Heart right ventricle (tissue), 16 donors: ENCODE measurements at regions of chr15 and their contacts with region 1.

Region 1: GRCh38 chr15:62549345-62549970 is 384.4 kb upstream of the C2CD4B start:
- DNase-seq: no peak
- ATAC-seq: no peak
- H3K4me3 ChIP-seq: no peak overlapping the region
- H3K27ac ChIP-seq: no peak overlapping the region
- H3K4me1 ChIP-seq: peaks cover 19 to 54% (median 45%) of the 10 kb centered on the region in 9 donors
- H3K27me3 ChIP-seq: no peaks in the 10 kb centered on the region
- CTCF ChIP-seq: peak; percentile 7 to 55 (median 41)

Region 2: GRCh38 chr15:62426387-62426956 is 123.0 kb before region 1 on chr15:
- intact Hi-C with region 1: no loop called
- DNase-seq: no peak
- ATAC-seq: no peak
- H3K4me3 ChIP-seq: no peak overlapping the region
- H3K27ac ChIP-seq: no peak overlapping the region
- H3K4me1 ChIP-seq: peaks cover 3 to 40% (median 21%) of the 10 kb centered on the region in 9 donors
- H3K27me3 ChIP-seq: no peaks in the 10 kb centered on the region
- CTCF ChIP-seq: no peak

Region 3: GRCh38 chr15:62495670-62496614 is 53.5 kb before region 1 on chr15:
- intact Hi-C with region 1: loop called in 1 of 10 experiments (anchors 5 kb)
- DNase-seq: peak in 1 of 2 donors; percentile 60
- ATAC-seq: peak; percentile 49 to 91 (median 82)
- H3K4me3 ChIP-seq: no peak overlapping the region
- H3K27ac ChIP-seq: peak overlapping the region in 9 of 10 donors; percentile 34 to 76 (median 58)
- H3K4me1 ChIP-seq: peaks cover 8 to 65% (median 45%) of the 10 kb centered on the region in 9 donors
- H3K27me3 ChIP-seq: no peaks in the 10 kb centered on the region
- CTCF ChIP-seq: no peak

Region 4: DNA sequence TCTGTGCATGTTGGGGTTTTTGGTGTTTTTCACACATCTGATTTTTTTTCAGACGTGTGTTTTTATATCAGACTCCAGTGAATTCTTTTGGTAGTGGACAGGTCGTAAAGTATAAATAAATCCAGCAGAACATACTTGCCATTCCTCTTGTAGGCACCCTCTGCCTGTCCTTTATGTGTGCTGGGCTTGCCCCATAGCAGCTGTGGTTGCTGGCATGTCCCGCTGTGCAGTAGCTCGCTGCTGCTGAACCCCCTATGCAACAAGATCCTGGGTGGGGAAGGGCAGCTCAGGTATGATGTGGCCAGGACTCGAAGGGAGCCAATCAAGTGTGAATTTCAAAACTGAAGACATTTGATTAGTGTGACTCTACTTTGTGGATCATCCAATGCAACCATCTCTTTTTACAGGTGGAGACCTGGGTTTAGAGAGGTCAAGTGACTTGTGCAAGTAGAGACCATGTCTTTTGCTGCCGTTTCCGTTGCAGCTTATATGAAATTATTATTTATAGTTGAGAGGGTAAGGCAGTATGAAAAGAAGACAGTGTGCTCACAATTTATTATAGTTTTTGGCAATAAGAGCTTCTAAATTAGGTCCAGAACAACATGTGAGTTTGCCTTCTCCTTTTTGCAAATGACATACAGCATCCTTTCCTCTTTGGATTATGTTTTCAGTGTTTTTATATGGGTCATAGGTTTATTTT is 33.6 kb before region 1 on chr15:
- intact Hi-C with region 1: loop called in 1 of 10 experiments (anchors 5 kb)
- DNase-seq: no peak
- ATAC-seq: peak in 5 of 8 donors; percentile 46 to 64 (median 50)
- H3K4me3 ChIP-seq: no peak overlapping the region
- H3K27ac ChIP-seq: peak overlapping the region in 3 of 10 donors; percentile 17 to 38 (median 20)
- H3K4me1 ChIP-seq: peaks cover 0 to 44% (median 7%) of the 10 kb centered on the region in 9 donors
- H3K27me3 ChIP-seq: no peaks in the 10 kb centered on the region
- CTCF ChIP-seq: no peak

Region 5: DNA sequence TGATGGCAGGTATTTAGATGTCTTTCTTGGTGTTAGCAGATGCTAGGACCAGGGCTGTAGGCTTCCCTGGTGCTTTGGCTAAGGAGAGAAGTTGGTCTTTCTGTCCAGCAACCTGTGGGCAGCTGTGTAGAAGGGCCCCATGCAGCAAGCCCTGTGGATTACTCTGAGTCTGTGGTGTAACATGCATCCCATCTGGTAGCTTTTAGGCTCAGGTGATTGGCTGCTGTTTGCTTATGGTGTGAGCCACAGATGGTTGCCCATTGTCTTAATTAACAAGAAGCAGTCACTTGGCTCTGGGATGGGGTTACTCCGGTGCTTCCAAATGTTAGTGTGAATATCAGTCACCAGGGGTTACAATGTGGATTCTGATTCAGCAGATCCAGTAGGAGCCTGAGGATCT is 15.8 kb before region 1 on chr15:
- intact Hi-C with region 1: no loop called
- DNase-seq: no peak
- ATAC-seq: peak in 3 of 8 donors; percentile 14 to 29 (median 18)
- H3K4me3 ChIP-seq: no peak overlapping the region
- H3K27ac ChIP-seq: no peak overlapping the region
- H3K4me1 ChIP-seq: peaks cover 0 to 21% (median 14%) of the 10 kb centered on the region in 9 donors
- H3K27me3 ChIP-seq: no peaks in the 10 kb centered on the region
- CTCF ChIP-seq: no peak

Region 6: DNA sequence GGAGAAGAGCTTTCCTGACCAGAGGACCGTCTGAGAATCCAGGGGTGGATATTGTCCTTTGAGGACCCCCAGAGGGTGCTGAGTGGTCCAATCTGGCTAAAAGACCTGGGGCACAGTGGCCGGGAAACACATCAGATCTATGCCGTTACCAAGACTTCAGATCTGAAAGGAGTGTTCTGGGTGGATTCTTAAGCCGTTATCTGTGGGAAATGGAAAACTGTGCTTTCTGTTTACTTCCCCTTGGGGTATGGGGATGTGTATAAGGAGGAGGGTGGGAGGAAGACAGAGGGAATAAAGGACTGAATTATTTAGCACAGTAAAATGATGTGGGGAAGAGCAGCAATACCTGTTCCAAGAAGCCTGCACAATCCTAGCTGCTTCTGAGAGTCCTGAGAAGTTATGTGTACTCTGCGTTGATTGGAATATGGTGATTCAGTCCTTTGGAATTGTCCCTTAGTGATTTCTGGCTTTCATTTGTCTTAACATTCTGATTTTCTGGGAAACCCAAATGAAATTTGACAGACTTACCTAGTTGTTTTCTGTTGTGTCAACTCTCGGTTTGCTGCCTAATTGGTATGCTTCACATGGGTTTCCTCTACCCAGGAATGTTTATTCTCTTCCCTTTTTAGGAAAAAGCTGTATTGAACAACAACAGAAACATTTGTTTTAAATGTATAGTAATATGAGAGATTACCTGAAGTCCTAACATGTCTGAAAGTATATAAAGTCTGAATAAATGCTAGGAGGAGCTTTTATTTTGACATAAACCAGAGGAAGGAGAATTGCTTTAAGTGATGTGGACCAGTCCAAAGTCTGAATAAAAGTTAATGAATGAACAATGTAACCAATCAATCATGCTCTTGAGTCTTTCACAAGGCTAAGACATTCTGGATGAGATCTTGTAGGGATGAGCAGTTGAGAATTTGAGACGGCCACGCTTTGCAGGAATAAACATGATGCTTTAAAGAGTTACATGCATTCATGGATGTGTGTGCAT is 42.7 kb after region 1 on chr15:
- intact Hi-C with region 1: loop called in 1 of 10 experiments (anchors 5 kb)
- DNase-seq: no peak
- ATAC-seq: peak in 4 of 8 donors; percentile 39 to 76 (median 44)
- H3K4me3 ChIP-seq: no peak overlapping the region
- H3K27ac ChIP-seq: no peak overlapping the region
- H3K4me1 ChIP-seq: peaks cover 0 to 43% (median 25%) of the 10 kb centered on the region in 9 donors
- H3K27me3 ChIP-seq: no peaks in the 10 kb centered on the region
- CTCF ChIP-seq: no peak